Naive thymus-derived CD4-positive, alpha-beta T cell (primary cell): ENCODE measurements at regions of chr3 and their contacts with region 1.

Region 1: DNA sequence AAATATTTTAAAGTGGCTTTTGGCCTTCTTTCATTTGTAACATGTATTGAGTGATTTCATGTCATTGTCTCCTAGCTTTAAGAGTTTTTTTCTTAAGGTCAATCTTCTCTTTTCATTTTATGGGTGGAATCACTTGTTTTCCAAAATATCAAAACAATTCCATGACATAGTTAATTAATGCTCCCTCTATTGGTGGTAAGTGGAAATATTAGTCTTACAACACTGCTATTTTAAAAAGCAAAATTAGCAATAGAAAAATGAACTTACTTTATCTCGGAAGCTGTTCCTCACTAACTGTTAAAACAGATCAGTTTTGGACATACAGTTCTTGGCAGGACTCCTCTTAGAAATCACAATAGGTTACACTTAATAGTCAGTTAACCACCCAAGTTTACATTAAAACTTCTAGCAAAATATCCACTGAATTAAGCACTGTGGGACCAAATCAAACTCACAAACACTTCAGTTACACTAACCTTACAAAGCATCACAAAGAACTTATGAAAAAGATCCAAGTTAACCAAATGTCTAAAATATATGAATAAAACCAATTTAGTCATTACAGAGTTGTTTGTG is 42.4 kb downstream of the TIGIT start:
- DNase-seq: peak in 2 of 9 donors; percentile 2 to 4
- ATAC-seq: no peak
- H3K4me3 ChIP-seq: no peak overlapping the region
- H3K4me3 Mint-ChIP-seq: no peak overlapping the region
- H3K27ac ChIP-seq: no peak overlapping the region
- H3K27ac Mint-ChIP-seq: peak overlapping the region in 1 of 9 donors; percentile 9
- H3K4me1 ChIP-seq: peaks cover 0 to 38% of the 10 kb centered on the region in 2 donors
- H3K4me1 Mint-ChIP-seq: peaks cover 0 to 25% (median 4%) of the 10 kb centered on the region in 7 donors
- H3K27me3 ChIP-seq: no peaks in the 10 kb centered on the region
- H3K27me3 Mint-ChIP-seq: no peaks in the 10 kb centered on the region

Region 2: DNA sequence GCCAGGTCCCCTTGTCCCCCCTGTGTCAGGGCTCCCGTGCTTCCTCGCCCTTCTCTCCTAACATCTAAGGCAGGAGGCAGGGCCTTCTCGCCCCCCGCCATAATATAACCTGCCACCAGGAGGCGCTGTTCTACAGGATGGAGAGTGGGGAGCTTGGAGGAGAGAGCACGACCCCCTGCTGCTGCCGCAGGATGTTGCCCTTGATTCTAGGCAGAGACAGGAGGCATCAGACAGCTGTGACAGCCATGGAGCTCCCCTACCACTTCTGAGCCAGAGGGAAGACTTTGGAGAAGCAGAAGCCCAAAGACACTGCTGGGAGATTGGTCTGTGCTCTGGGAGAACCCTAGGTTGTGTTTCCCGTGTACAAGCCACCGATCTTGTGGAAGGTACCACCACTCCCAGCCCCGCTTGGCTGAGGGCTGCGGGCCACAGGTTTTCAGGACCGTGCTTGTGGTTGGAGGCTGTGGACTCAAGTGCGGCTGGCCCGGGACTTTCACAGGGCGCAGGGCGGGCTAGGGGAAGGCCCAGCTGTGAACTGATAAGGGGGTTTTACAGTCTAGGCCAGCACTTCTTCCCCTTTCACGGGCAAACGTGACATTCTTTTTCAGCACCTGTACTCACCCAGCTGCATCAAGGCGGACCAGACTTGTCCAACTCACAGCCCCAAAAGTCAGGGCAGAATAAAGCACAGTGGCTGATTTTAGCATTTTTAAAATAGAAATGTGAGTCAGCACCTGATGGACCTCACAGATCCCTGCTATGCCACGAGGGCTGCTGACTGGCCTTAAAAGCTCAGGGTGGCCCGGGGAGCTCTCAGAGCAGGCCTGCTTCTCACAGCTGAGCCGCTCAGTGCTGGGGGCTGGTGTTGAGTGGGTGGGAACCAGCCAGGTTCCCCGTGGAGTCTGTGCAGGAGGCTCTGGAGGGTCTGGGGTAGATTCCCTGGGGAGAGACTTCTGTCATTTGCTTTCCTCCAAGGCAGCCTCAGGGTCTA is 45.0 kb before region 1 on chr3:
- CTCF ChIA-PET with region 1: no interaction called
- POLR2A ChIA-PET with region 1: interaction called, 6 read pairs
- intact Hi-C with region 1: loop called in 1 of 2 experiments (anchors 1 kb)
- DNase-seq: peak; percentile 61 to 85 (median 77)
- ATAC-seq: peak; percentile 88
- H3K4me3 ChIP-seq: peak overlapping the region; percentile 37
- H3K4me3 Mint-ChIP-seq: peak overlapping the region in 6 of 10 donors; percentile 7 to 66 (median 52)
- H3K27ac ChIP-seq: peak overlapping the region; percentile 51
- H3K27ac Mint-ChIP-seq: peak overlapping the region in 7 of 9 donors; percentile 27 to 80 (median 59)
- H3K4me1 ChIP-seq: peaks cover 4 to 42% of the 10 kb centered on the region in 2 donors
- H3K4me1 Mint-ChIP-seq: peaks cover 0 to 18% (median 5%) of the 10 kb centered on the region in 7 donors
- H3K27me3 ChIP-seq: no peaks in the 10 kb centered on the region
- H3K27me3 Mint-ChIP-seq: no peaks in the 10 kb centered on the region

Region 3: GRCh38 chr3:114383875-114384557 is 47.8 kb after region 1 on chr3:
- CTCF ChIA-PET with region 1: no interaction called
- POLR2A ChIA-PET with region 1: no interaction called
- intact Hi-C with region 1: no loop called
- DNase-seq: peak; percentile 7 to 58 (median 37)
- ATAC-seq: peak; percentile 96
- H3K4me3 ChIP-seq: peak overlapping the region; percentile 57
- H3K4me3 Mint-ChIP-seq: peak overlapping the region in 8 of 10 donors; percentile 60 to 88 (median 77)
- H3K27ac ChIP-seq: no peak overlapping the region
- H3K27ac Mint-ChIP-seq: peak overlapping the region in 5 of 9 donors; percentile 27 to 73 (median 56)
- H3K4me1 ChIP-seq: peaks cover 0 to 7% of the 10 kb centered on the region in 2 donors
- H3K4me1 Mint-ChIP-seq: peaks cover 0 to 23% (median 12%) of the 10 kb centered on the region in 7 donors
- H3K27me3 ChIP-seq: no peaks in the 10 kb centered on the region
- H3K27me3 Mint-ChIP-seq: no peaks in the 10 kb centered on the region

Region 4: GRCh38 chr3:114597013-114597412 is 260.8 kb after region 1 on chr3:
- CTCF ChIA-PET with region 1: no interaction called
- POLR2A ChIA-PET with region 1: no interaction called
- intact Hi-C with region 1: no loop called
- DNase-seq: no peak
- ATAC-seq: no peak
- H3K4me3 ChIP-seq: no peak overlapping the region
- H3K4me3 Mint-ChIP-seq: no peak overlapping the region
- H3K27ac ChIP-seq: no peak overlapping the region
- H3K27ac Mint-ChIP-seq: no peak overlapping the region
- H3K4me1 ChIP-seq: no peaks in the 10 kb centered on the region
- H3K4me1 Mint-ChIP-seq: peaks cover 0 to 5% (median 0%) of the 10 kb centered on the region in 7 donors
- H3K27me3 ChIP-seq: no peaks in the 10 kb centered on the region
- H3K27me3 Mint-ChIP-seq: no peaks in the 10 kb centered on the region